ENCODE measurements at regions of chr3 and their contacts with region 1.

Region 1: GRCh38 chr3:184874709-184875644 is 63.0 kb downstream of the VPS8 start:
- DNase-seq: peak; percentile 17 to 50 (median 34)
- ATAC-seq: peak; percentile 78
- H3K4me3 ChIP-seq: no peak overlapping the region
- H3K27ac ChIP-seq: no peak overlapping the region
- H3K4me1 ChIP-seq: no peaks in the 10 kb centered on the region
- H3K27me3 ChIP-seq: no peaks in the 10 kb centered on the region
- CTCF ChIP-seq: peak; percentile 62 to 86 (median 64); a peak in 5 of 6 replicates
- EP300 ChIP-seq: no peak
- POLR2A ChIP-seq: no peak
- RAD21 ChIP-seq: peak; percentile 85 to 93

Region 2: GRCh38 chr3:184405075-184406030 is 469.6 kb before region 1 on chr3:
- CTCF ChIA-PET with region 1: no interaction called
- POLR2A ChIA-PET with region 1: no interaction called
- in situ Hi-C with region 1: no loop called
- intact Hi-C with region 1: no loop called
- DNase-seq: peak in 1 of 4 experiments; percentile 34
- ATAC-seq: peak; percentile 80
- H3K4me3 ChIP-seq: no peak overlapping the region
- H3K27ac ChIP-seq: no peak overlapping the region
- H3K4me1 ChIP-seq: no peaks in the 10 kb centered on the region; a peak in 1 of 5 replicates
- H3K27me3 ChIP-seq: peaks cover 39 to 77% of the 10 kb centered on the region in 2 experiments
- CTCF ChIP-seq: no peak
- EP300 ChIP-seq: no peak
- POLR2A ChIP-seq: no peak
- RAD21 ChIP-seq: no peak

Region 3: DNA sequence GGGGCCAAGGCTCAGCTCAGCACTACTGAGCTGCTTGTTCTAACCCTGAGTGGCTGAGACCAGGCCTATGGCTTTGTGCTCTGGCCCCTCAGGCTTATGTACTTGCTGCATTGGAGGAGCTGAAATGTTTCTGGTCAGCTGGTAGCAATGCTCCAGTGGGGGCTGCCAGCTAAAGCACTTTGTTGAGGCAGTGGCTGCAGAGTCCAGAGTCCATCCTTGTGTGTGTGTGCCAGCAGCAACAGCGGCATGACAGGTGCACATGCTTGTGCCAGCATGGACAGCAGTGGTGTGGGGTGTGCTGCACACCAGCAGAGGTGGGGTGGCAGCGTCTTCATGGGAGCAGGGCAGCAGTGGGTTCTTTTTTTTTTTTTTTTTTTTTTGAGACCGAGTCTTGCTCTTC is 106.1 kb after region 1 on chr3:
- CTCF ChIA-PET with region 1: no interaction called
- POLR2A ChIA-PET with region 1: no interaction called
- in situ Hi-C with region 1: no loop called
- intact Hi-C with region 1: no loop called
- DNase-seq: no peak
- ATAC-seq: no peak
- H3K4me3 ChIP-seq: no peak overlapping the region
- H3K27ac ChIP-seq: no peak overlapping the region
- H3K4me1 ChIP-seq: no peaks in the 10 kb centered on the region
- H3K27me3 ChIP-seq: no peaks in the 10 kb centered on the region
- CTCF ChIP-seq: no peak
- EP300 ChIP-seq: no peak
- POLR2A ChIP-seq: no peak
- RAD21 ChIP-seq: no peak

Region 4: GRCh38 chr3:185070491-185071286 is 195.7 kb after region 1 on chr3:
- CTCF ChIA-PET with region 1: no interaction called
- POLR2A ChIA-PET with region 1: no interaction called
- in situ Hi-C with region 1: no loop called
- intact Hi-C with region 1: loop called (anchors 5 kb)
- DNase-seq: peak; percentile 44 to 63 (median 51)
- ATAC-seq: peak; percentile 97
- H3K4me3 ChIP-seq: no peak overlapping the region
- H3K27ac ChIP-seq: no peak overlapping the region
- H3K4me1 ChIP-seq: peaks cover 4 to 19% of the 10 kb centered on the region in 2 experiments; a peak in 4 of 5 replicates
- H3K27me3 ChIP-seq: peaks cover 12 to 52% of the 10 kb centered on the region in 2 experiments; a peak in 3 of 5 replicates
- CTCF ChIP-seq: peak; percentile 56 to 73 (median 63)
- EP300 ChIP-seq: no peak
- POLR2A ChIP-seq: no peak
- RAD21 ChIP-seq: peak; percentile 13 to 56; a peak in 3 of 4 replicates

Region 5: DNA sequence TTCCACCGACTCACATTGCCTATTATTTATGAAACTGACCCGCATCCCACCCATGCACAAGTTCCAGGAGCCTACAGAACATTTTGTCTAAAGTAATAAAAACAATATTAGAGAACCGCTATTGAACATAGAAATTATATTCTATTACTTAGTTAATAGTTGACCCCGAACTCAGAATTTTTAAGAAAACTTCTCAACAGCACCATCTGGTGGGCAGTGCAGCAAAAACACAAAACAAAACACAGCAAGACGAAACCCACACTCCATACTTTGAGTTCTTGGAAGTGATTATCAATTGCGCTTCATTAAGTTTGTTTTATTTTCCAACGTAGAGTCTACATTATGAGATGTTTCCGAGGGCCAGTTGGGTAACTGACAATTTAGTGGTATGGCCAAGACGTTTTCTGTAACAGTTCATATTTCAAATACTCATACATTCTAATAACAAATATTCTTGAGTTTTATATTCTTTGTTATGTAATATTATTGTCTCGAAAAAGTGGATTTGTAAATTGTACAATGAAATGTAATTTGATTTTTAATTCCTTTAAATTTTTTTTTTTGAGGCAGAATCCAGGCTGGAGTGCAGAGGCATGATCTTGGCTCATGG is 301.9 kb after region 1 on chr3:
- CTCF ChIA-PET with region 1: interaction called, 15 read pairs
- POLR2A ChIA-PET with region 1: no interaction called
- in situ Hi-C with region 1: no loop called
- intact Hi-C with region 1: loop called (anchors 1 kb)
- DNase-seq: peak; percentile 24 to 66 (median 35)
- ATAC-seq: peak; percentile 39; the same call in 1 of the 3 replicates
- H3K4me3 ChIP-seq: no peak overlapping the region
- H3K27ac ChIP-seq: no peak overlapping the region
- H3K4me1 ChIP-seq: peaks cover 7 to 13% of the 10 kb centered on the region in 2 experiments; a peak in 4 of 5 replicates
- H3K27me3 ChIP-seq: peaks cover 8 to 13% of the 10 kb centered on the region in 2 experiments; a peak in 4 of 5 replicates
- CTCF ChIP-seq: peak; percentile 49 to 72 (median 65); a peak in 5 of 6 replicates
- EP300 ChIP-seq: no peak
- POLR2A ChIP-seq: no peak
- RAD21 ChIP-seq: peak; percentile 72 to 77

Region 6: DNA sequence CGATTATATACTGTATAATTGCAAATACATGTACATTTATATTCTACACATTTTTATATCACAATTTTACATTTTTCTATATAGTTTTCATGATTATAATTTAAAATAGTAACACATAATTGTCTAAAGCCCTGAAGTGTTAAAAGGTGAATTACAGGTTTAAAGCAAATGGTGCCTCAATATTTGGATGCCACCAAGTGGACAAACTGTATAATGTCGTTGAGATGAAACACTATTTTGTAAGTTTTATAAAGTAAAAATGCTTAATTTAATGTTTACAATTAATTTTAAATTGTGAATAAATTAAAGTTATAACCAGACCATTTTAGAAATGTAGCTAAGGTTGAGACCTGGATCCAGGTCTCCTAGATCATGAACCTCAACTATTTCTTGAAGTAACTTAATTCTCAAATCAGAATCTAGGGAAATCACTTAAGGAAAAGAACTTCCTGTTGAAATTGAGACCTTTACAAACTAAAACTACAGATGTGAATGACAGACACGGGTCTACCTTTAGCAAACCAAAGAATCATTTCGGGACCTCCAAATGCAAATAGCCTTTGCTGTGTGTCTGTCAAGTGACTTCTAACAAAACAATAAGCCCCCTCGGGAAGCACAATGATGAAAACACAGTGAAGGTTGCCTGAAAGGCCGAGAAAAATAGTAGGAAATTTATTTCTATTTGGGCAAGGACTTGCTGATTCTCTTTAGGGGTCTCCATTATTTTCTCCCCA is 341.1 kb after region 1 on chr3:
- CTCF ChIA-PET with region 1: interaction called, 21 read pairs
- POLR2A ChIA-PET with region 1: no interaction called
- in situ Hi-C with region 1: no loop called
- intact Hi-C with region 1: loop called (anchors 1 kb)
- DNase-seq: peak in 3 of 4 experiments; percentile 18 to 32 (median 20)
- ATAC-seq: 0 out of 3 replicates have a peak, but pooled peaks have one; percentile 51
- H3K4me3 ChIP-seq: no peak overlapping the region
- H3K27ac ChIP-seq: no peak overlapping the region
- H3K4me1 ChIP-seq: no peaks in the 10 kb centered on the region
- H3K27me3 ChIP-seq: no peaks in the 10 kb centered on the region
- CTCF ChIP-seq: peak in 2 of 3 experiments; percentile 45 to 72; a peak in 4 of 6 replicates
- EP300 ChIP-seq: no peak
- POLR2A ChIP-seq: no peak
- RAD21 ChIP-seq: peak; percentile 77 to 82

Region 7: DNA sequence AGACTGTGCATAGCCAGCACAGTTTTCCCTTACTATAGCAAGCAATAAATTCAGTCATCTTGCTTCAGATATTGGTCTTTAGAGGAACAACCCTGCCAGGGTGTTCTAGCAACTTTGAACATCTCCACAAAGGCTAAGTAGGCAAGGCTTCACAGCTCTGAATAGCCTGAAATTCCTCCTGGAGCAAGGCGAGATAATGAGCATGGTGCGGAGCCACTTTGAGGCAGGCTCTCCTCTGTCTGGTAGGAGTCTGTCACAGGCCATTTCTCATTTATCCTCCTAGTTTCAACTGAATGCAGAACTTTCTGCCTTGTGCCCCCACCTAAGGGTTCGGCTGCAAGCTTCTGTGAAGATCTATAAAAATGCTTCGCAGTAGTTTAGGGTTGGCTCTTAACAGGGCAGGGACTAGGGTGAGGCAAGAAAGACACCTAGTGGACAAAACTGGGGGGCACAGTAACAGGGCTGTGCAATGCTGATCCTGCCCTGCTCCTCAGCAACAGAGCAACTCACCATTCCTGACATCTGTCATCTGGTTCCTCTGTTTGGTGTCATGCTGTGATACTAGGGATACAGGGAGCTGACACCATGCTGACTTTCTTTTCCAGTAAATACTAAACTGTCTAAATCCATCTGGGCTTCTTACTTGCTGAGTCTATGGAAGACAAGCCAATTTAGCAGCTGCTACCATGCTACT is 395.4 kb after region 1 on chr3:
- CTCF ChIA-PET with region 1: interaction called, 7 read pairs
- POLR2A ChIA-PET with region 1: no interaction called
- in situ Hi-C with region 1: no loop called
- intact Hi-C with region 1: loop called (anchors 2 kb)
- DNase-seq: peak; percentile 54 to 70 (median 62)
- ATAC-seq: peak; percentile 100
- H3K4me3 ChIP-seq: no peak overlapping the region
- H3K27ac ChIP-seq: no peak overlapping the region
- H3K4me1 ChIP-seq: peaks cover 0 to 10% of the 10 kb centered on the region in 2 experiments; a peak in 2 of 5 replicates
- H3K27me3 ChIP-seq: no peaks in the 10 kb centered on the region; a peak in 1 of 5 replicates
- CTCF ChIP-seq: peak; percentile 73 to 79 (median 76)
- EP300 ChIP-seq: no peak
- POLR2A ChIP-seq: no peak
- RAD21 ChIP-seq: peak; percentile 68 to 85

Region 8: DNA sequence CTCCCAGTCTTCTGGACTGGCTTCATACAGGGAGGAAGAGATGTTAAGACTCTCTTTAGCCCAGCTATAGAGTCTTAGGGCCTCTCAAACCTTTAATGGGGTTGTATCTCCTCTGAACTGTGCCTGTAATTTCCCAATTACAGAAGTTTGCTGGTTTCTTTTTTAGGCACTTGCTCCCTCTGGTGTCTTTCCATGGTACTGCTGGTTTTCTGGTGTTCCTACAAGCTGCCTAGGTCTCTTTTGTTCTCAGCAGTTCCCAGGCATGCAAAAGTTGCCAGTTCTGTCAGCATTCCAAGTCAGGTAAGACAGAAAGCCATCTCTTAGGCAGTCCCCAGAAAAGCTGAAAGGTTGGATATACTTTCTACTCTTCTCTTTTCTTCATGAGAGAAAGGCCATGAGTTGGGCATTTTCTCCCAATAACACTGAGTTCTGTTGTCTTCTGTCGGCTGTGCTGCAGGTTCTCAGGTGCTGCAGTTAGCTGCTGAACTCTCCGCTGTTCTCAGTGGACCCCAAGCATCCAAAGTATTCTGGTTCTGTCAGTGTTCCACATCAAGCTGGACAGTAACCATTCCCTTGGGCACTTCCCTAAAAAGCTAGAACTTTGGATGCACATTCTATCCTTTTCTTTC is 433.3 kb after region 1 on chr3:
- CTCF ChIA-PET with region 1: interaction called, 25 read pairs
- POLR2A ChIA-PET with region 1: no interaction called
- in situ Hi-C with region 1: no loop called
- intact Hi-C with region 1: loop called (anchors 2 kb)
- DNase-seq: peak; percentile 62 to 79 (median 62)
- ATAC-seq: peak; percentile 85
- H3K4me3 ChIP-seq: no peak overlapping the region
- H3K27ac ChIP-seq: no peak overlapping the region
- H3K4me1 ChIP-seq: no peaks in the 10 kb centered on the region
- H3K27me3 ChIP-seq: no peaks in the 10 kb centered on the region
- CTCF ChIP-seq: peak; percentile 77 to 86 (median 82)
- EP300 ChIP-seq: no peak
- POLR2A ChIP-seq: no peak
- RAD21 ChIP-seq: peak; percentile 71 to 85